ENCODE measurements at regions of chr13 and their contacts with region 1.

Region 1: GRCh38 chr13:97026531-97027161 is 32.4 kb upstream of the OXGR1 start:
- DNase-seq: no peak
- ATAC-seq: no peak
- H3K4me3 ChIP-seq: no peak overlapping the region
- H3K4me3 Mint-ChIP-seq: no peak overlapping the region
- H3K27ac ChIP-seq: no peak overlapping the region
- H3K27ac Mint-ChIP-seq: no peak overlapping the region
- H3K4me1 ChIP-seq: no peaks in the 10 kb centered on the region
- H3K4me1 Mint-ChIP-seq: no peaks in the 10 kb centered on the region
- H3K27me3 ChIP-seq: peaks cover 6 to 14% of the 10 kb centered on the region in 2 experiments
- H3K27me3 Mint-ChIP-seq: peaks cover 61% of the 10 kb centered on the region
- CTCF ChIP-seq: no peak

Region 2: DNA sequence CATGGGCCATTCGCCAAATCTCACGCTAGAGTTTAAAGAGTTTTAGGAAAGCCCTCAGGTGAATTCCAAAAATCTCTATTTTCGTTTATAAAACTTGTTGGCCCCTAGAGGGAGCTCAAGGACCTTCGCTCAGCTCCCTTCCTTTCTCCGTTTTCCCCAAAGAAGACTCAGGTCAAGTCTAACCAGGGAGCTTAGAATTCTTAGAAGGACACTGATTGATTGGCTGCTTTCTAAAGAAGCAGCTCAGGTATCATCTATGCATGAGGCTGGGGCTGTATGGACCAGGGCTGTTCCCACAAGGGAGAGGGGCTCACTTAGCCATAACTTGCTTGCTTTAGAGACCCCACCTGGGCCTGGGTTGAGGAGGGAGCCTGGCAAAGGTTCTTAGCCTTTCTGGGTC is 1402.6 kb before region 1 on chr13:
- CTCF ChIA-PET with region 1: no interaction called
- POLR2A ChIA-PET with region 1: no interaction called
- intact Hi-C with region 1: loop called in 1 of 2 experiments (anchors 10 kb)
- DNase-seq: peak in 4 of 14 experiments; percentile 33 to 70 (median 54)
- ATAC-seq: no peak
- H3K4me3 ChIP-seq: no peak overlapping the region
- H3K4me3 Mint-ChIP-seq: no peak overlapping the region
- H3K27ac ChIP-seq: no peak overlapping the region
- H3K27ac Mint-ChIP-seq: no peak overlapping the region
- H3K4me1 ChIP-seq: no peaks in the 10 kb centered on the region
- H3K4me1 Mint-ChIP-seq: no peaks in the 10 kb centered on the region
- H3K27me3 ChIP-seq: peaks cover 0 to 4% of the 10 kb centered on the region in 2 experiments
- H3K27me3 Mint-ChIP-seq: peaks cover 22% of the 10 kb centered on the region
- CTCF ChIP-seq: peak; percentile 74

Measured in CD4-positive, alpha-beta T cell (primary cell).